ENCODE measurements at regions of chr15 and their contacts with region 1.

Region 1: DNA sequence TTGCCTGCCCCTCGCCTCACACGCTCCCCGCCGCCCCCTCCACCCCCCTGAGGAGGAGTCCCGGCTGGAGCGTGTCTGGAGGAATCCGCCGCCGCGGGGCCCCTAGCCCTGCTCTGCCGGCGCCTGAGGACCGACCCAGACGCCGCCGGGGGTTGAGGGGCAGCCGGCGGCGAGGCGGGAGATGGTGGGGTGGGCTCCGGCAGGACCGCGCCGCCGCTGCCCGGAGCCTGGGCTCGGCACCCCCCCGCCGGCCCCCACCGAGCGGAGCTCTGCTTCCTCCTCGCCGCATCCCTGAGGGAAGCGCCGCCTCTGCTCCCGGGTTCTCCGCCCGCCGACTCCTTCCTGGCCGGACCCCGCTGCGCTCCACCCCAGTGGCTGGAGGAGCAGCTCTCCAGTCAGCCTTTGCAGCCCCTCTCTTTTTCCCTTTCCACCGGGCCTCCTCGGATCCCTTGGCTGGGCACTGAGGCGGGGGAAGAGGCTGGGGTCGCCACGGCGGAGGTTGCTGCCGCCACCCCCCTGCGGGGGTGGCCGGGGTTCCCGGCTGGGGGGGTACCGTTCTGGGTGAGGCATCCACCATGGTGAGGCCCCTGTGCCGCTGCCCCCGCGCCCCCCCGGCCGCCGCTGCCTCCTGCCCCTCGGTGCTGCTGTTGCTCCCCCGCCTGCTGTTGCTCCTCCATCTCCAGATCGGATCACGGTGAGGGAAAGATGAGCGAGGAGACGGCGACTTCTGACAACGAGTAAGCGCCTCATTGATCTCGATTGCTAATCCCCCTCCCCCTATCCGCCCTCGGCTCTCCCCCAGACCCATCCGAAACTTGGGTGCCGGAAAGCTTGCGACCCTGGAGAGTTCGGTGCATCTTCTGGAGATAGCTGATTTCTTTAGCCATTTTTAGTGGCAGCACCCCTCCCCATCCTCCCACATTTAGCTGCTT is at the start of gene SPRED1:
- DNase-seq: peak; percentile 33
- H3K4me3 Mint-ChIP-seq: peak within 1 kb of the TSS; percentile 75
- H3K27ac Mint-ChIP-seq: peak within 1 kb of the TSS; percentile 4
- H3K4me1 Mint-ChIP-seq: peaks cover 25% of the 10 kb centered on the region
- H3K27me3 Mint-ChIP-seq: peaks cover 18% of the 10 kb centered on the region
- total RNA-seq, gene SPRED1: 0.92 to 0.97 TPM

Region 2: GRCh38 chr15:38072348-38073177 is 180.2 kb before region 1 on chr15:
- CTCF ChIA-PET with region 1: no interaction called
- POLR2A ChIA-PET with region 1: no interaction called
- intact Hi-C with region 1: loop called (anchors 5 kb)
- DNase-seq: peak; percentile 48
- H3K4me3 Mint-ChIP-seq: peak overlapping the region; percentile 50
- H3K27ac Mint-ChIP-seq: no peak overlapping the region
- H3K4me1 Mint-ChIP-seq: peaks cover 27% of the 10 kb centered on the region
- H3K27me3 Mint-ChIP-seq: peaks cover 59% of the 10 kb centered on the region

Region 3: DNA sequence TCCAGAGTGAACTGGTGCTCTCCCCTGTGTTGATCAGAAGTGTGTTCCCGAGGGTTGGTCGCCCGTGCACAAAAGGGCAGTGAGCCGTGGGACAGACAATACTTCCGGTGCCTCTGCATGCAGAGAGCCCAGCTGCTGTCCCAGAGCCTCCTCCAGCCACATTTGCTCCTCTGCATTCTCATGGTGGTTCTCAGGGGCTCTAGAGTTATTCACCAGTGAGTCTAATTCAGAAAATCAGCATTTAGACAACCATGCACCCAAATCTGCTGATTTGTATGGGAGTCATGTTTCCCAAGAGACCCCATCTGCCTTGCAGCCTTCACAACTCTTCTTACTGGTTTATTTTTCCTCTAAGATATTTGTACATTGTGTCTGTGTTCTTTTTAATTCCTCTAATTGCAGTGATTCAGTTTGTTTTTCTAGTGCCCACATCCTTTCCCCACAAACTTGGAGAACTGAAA is 107.1 kb before region 1 on chr15:
- CTCF ChIA-PET with region 1: no interaction called
- POLR2A ChIA-PET with region 1: no interaction called
- intact Hi-C with region 1: no loop called
- DNase-seq: no peak
- H3K4me3 Mint-ChIP-seq: no peak overlapping the region
- H3K27ac Mint-ChIP-seq: no peak overlapping the region
- H3K4me1 Mint-ChIP-seq: no peaks in the 10 kb centered on the region
- H3K27me3 Mint-ChIP-seq: peaks cover 4% of the 10 kb centered on the region

Region 4: GRCh38 chr15:38297623-38298388 is 45.1 kb after region 1 on chr15:
- CTCF ChIA-PET with region 1: no interaction called
- POLR2A ChIA-PET with region 1: no interaction called
- intact Hi-C with region 1: no loop called
- DNase-seq: no peak
- H3K4me3 Mint-ChIP-seq: no peak overlapping the region
- H3K27ac Mint-ChIP-seq: no peak overlapping the region
- H3K4me1 Mint-ChIP-seq: no peaks in the 10 kb centered on the region
- H3K27me3 Mint-ChIP-seq: peaks cover 12% of the 10 kb centered on the region

Region 5: GRCh38 chr15:38308797-38309196 is 56.0 kb after region 1 on chr15:
- CTCF ChIA-PET with region 1: no interaction called
- POLR2A ChIA-PET with region 1: interaction called, 3 read pairs
- intact Hi-C with region 1: loop called (anchors 2 kb)
- DNase-seq: peak; percentile 42
- H3K4me3 Mint-ChIP-seq: no peak overlapping the region
- H3K27ac Mint-ChIP-seq: no peak overlapping the region
- H3K4me1 Mint-ChIP-seq: peaks cover 22% of the 10 kb centered on the region
- H3K27me3 Mint-ChIP-seq: peaks cover 32% of the 10 kb centered on the region

Region 6: GRCh38 chr15:38354315-38354929 is 101.7 kb after region 1 on chr15:
- CTCF ChIA-PET with region 1: interaction called, 5 read pairs
- POLR2A ChIA-PET with region 1: no interaction called
- intact Hi-C with region 1: loop called (anchors 1 kb)
- DNase-seq: peak; percentile 66
- H3K4me3 Mint-ChIP-seq: no peak overlapping the region
- H3K27ac Mint-ChIP-seq: no peak overlapping the region
- H3K4me1 Mint-ChIP-seq: no peaks in the 10 kb centered on the region
- H3K27me3 Mint-ChIP-seq: peaks cover 8% of the 10 kb centered on the region

Region 7: GRCh38 chr15:38547255-38547997 is 294.7 kb after region 1 on chr15:
- CTCF ChIA-PET with region 1: no interaction called
- POLR2A ChIA-PET with region 1: no interaction called
- intact Hi-C with region 1: no loop called
- DNase-seq: peak; percentile 58
- H3K4me3 Mint-ChIP-seq: no peak overlapping the region
- H3K27ac Mint-ChIP-seq: peak overlapping the region; percentile 77
- H3K4me1 Mint-ChIP-seq: peaks cover 85% of the 10 kb centered on the region
- H3K27me3 Mint-ChIP-seq: no peaks in the 10 kb centered on the region

Measured in activated CD4-positive, alpha-beta memory T cell treated with anti-CD3 and anti-CD28 coated beads for 36 hours (primary cell).